ENCODE measurements at regions of chr1 and their contacts with region 1.

Region 1: DNA sequence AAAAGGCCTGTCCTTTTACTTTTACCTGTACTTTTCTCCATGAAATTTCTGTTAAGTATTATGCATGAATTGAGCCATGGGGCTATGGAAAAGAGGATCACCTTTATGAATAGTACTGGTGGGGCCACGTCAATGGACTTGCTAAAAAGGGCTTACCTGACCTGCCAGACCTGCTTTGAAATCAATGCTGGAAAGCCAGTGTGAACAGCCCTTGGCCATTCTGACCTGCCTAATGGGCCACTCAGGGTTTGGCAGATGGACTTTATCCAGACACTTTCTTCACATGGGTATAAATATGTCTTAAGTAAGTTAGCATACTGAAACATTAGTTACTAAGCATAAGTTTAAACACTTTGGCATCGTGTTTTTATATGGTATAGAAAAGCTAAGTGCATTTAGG is 8.3 kb upstream of the GUK1 start:
- DNase-seq: peak; percentile 27 to 63
- H3K4me3 ChIP-seq: peak overlapping the region; percentile 62; the same call in 1 of the 2 replicates
- H3K27ac ChIP-seq: peak overlapping the region; percentile 82
- H3K4me1 ChIP-seq: peaks cover 16% of the 10 kb centered on the region
- H3K27me3 ChIP-seq: no peaks in the 10 kb centered on the region
- CTCF ChIP-seq: no peak

Region 2: GRCh38 chr1:227999056-227999930 is 132.5 kb before region 1 on chr1:
- CTCF ChIA-PET with region 1: interaction called, 21 read pairs
- POLR2A ChIA-PET with region 1: no interaction called
- intact Hi-C with region 1: loop called (anchors 1 kb)
- DNase-seq: peak; percentile 80 to 91
- H3K4me3 ChIP-seq: no peak overlapping the region
- H3K27ac ChIP-seq: no peak overlapping the region
- H3K4me1 ChIP-seq: no peaks in the 10 kb centered on the region
- H3K27me3 ChIP-seq: no peaks in the 10 kb centered on the region
- CTCF ChIP-seq: peak; percentile 93

Region 3: DNA sequence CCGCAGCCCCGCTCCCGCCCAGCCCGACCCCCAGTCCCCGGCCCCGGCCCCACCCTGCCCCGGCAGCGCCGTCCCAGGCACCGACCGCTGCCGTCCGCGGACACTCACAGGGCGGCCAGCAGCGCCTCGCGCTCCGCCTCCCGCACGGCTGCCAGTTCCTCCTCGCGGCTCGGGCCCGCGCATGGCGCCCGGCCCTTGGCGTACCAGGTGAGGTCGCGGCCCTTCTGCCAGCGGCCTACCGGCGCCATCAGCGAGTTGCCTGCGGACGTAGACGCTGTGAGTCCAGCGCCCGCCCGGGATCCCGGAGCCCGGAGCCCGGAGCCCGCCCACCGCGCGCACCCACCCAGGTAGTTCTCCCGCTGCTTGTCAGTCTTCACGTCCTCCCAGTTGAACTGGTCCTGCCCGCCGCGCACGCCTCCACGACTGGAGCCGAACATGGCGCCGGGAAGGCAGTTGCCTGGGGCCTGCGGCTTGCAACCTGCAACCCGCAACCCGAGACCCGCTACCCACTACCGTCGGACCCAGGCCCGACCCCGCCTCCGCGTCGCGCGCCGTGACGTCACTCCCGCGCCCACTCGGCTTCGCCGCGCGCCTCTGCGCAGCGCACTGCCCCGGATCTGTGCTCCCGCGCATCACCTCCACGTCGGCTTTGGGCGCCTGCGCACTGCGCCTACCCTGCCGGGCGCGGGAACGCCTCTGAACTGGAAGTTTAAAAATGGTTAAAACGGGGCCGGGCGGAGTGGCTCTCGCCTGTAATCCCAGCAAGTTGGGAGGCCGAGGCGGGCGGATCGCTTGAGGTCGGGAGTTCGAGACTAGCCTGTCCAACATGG is 28.8 kb before region 1 on chr1 and contains the start of gene C1orf35:
- CTCF ChIA-PET with region 1: no interaction called
- POLR2A ChIA-PET with region 1: no interaction called
- intact Hi-C with region 1: loop called (anchors 1 kb)
- DNase-seq: peak; percentile 79 to 95
- H3K4me3 ChIP-seq: peak within 1 kb of the TSS; percentile 85
- H3K27ac ChIP-seq: no peak within 1 kb of the TSS
- H3K4me1 ChIP-seq: peaks cover 9% of the 10 kb centered on the region
- H3K27me3 ChIP-seq: no peaks in the 10 kb centered on the region
- CTCF ChIP-seq: no peak
- total RNA-seq, gene C1orf35: 26.4 and 37.6 TPM in 2 replicates

Region 4: GRCh38 chr1:228165372-228166169 is 33.8 kb after region 1 on chr1 and contains the start of gene IBA57:
- CTCF ChIA-PET with region 1: interaction called, 8 read pairs
- POLR2A ChIA-PET with region 1: interaction called, 5 read pairs
- intact Hi-C with region 1: loop called (anchors 1 kb)
- DNase-seq: peak; percentile 93 to 100
- H3K4me3 ChIP-seq: peak within 1 kb of the TSS; percentile 88
- H3K27ac ChIP-seq: peak within 1 kb of the TSS; percentile 89
- H3K4me1 ChIP-seq: peaks cover 13% of the 10 kb centered on the region
- H3K27me3 ChIP-seq: no peaks in the 10 kb centered on the region
- CTCF ChIP-seq: peak; percentile 79
- total RNA-seq, gene IBA57: 7.8 and 13.8 TPM in 2 replicates

Region 5: GRCh38 chr1:228242409-228242808 is 110.6 kb after region 1 on chr1:
- CTCF ChIA-PET with region 1: no interaction called
- POLR2A ChIA-PET with region 1: no interaction called
- intact Hi-C with region 1: no loop called
- DNase-seq: no peak
- H3K4me3 ChIP-seq: no peak overlapping the region
- H3K27ac ChIP-seq: no peak overlapping the region
- H3K4me1 ChIP-seq: no peaks in the 10 kb centered on the region
- H3K27me3 ChIP-seq: no peaks in the 10 kb centered on the region
- CTCF ChIP-seq: no peak

Region 6: DNA sequence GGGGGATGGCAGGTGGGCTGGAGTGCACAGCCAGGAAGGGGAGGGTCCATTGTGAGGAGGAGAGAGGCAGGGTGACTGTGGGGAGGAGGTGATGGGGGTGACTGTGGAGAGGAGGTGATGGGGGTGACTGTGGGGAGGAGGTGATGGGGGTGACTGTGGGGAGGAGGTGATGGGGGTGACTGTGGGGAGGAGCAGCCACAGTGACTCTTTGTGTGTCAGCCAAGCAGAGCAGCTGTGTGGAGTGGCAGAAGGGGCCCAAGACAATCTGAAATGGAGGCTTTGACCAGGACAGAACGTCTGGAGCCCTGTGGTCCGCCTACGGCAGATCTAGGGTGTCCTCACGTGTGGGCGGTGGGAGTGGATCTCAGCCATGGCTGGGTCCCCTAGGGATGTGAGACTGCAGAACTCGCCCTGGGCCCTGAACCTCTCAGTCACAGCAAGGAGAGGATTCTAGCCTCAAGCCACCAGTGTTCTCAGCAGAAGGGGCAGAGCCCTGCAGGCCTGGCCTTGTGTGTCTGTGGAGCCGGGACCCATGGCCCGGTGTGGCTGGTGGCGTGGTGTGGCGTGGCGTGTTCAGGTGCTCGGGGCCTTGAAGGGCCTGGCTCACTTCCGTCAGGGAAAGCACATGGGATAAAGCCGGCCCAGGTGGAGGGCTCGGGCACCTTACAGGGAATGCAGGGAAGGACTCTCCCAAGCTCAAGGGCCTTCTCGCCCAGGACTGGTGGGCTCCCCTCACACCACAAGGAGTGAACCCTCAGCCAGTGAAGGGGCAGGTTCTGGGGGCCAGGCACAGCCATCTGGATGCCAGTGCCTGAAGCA is 157.7 kb after region 1 on chr1:
- CTCF ChIA-PET with region 1: interaction called, 13 read pairs
- POLR2A ChIA-PET with region 1: no interaction called
- intact Hi-C with region 1: no loop called
- DNase-seq: no peak
- H3K4me3 ChIP-seq: no peak overlapping the region
- H3K27ac ChIP-seq: no peak overlapping the region
- H3K4me1 ChIP-seq: no peaks in the 10 kb centered on the region
- H3K27me3 ChIP-seq: no peaks in the 10 kb centered on the region
- CTCF ChIP-seq: no peak

Region 7: DNA sequence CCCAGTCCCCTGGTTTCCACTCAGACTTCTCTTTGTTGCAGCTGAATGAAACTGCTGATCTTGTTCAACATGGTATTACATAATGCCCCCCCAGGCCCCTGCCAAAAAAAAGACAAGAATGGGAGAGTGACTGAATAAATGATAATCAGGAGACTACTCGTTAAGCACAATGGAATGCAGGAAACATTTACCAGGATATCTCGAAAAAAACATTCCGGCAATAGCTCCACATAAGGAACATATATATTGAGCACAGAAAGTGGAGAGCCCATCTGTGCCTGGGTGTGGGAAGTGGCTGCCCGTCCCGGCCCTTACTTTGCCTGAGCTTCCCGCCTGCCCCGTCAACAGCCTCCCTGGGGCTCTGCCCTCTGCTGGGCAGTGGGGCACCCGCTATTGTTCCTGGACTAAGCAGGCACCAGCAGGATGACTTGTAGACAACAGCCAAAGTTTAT is 261.5 kb after region 1 on chr1:
- CTCF ChIA-PET with region 1: interaction called, 3 read pairs
- POLR2A ChIA-PET with region 1: no interaction called
- intact Hi-C with region 1: loop called (anchors 5 kb)
- DNase-seq: peak; percentile 63 to 79
- H3K4me3 ChIP-seq: no peak overlapping the region
- H3K27ac ChIP-seq: peak overlapping the region; percentile 17; the same call in 1 of the 2 replicates
- H3K4me1 ChIP-seq: peaks cover 20% of the 10 kb centered on the region
- H3K27me3 ChIP-seq: no peaks in the 10 kb centered on the region
- CTCF ChIP-seq: peak; percentile 57; the same call in 1 of the 2 replicates

Region 8: GRCh38 chr1:228515200-228515834 is 383.6 kb after region 1 on chr1:
- CTCF ChIA-PET with region 1: no interaction called
- POLR2A ChIA-PET with region 1: no interaction called
- intact Hi-C with region 1: loop called (anchors 1 kb)
- DNase-seq: peak in 1 of 2 experiments; percentile 46
- H3K4me3 ChIP-seq: no peak overlapping the region
- H3K27ac ChIP-seq: no peak overlapping the region
- H3K4me1 ChIP-seq: no peaks in the 10 kb centered on the region
- H3K27me3 ChIP-seq: peaks cover 27% of the 10 kb centered on the region
- CTCF ChIP-seq: peak; percentile 87

Measured in PC-9 (cell line).